Vagina (tissue), 2 donors: ENCODE measurements at regions of chr22 and their contacts with region 1.

Region 1: GRCh38 chr22:37544955-37545699 is 15.2 kb upstream of the CDC42EP1 start:
- DNase-seq: no peak
- H3K4me3 ChIP-seq: peak overlapping the region; percentile 33 to 38
- H3K27ac ChIP-seq: peak overlapping the region; percentile 98
- H3K4me1 ChIP-seq: peaks cover 78% of the 10 kb centered on the region
- H3K27me3 ChIP-seq: no peaks in the 10 kb centered on the region
- CTCF ChIP-seq: peak; percentile 32 to 70 (median 41)
- POLR2A ChIP-seq: no peak

Region 2: GRCh38 chr22:37267135-37267587 is 278.0 kb before region 1 on chr22:
- intact Hi-C with region 1: no loop called
- DNase-seq: no peak
- H3K4me3 ChIP-seq: no peak overlapping the region
- H3K27ac ChIP-seq: no peak overlapping the region
- H3K4me1 ChIP-seq: no peaks in the 10 kb centered on the region
- H3K27me3 ChIP-seq: no peaks in the 10 kb centered on the region
- CTCF ChIP-seq: peak; percentile 22 to 39 (median 29)
- POLR2A ChIP-seq: no peak

Region 3: GRCh38 chr22:37561212-37562048 is 16.3 kb after region 1 on chr22:
- intact Hi-C with region 1: loop called (anchors 2 kb)
- DNase-seq: no peak
- H3K4me3 ChIP-seq: peak overlapping the region; percentile 84 to 89
- H3K27ac ChIP-seq: peak overlapping the region; percentile 99
- H3K4me1 ChIP-seq: peaks cover 75% of the 10 kb centered on the region
- H3K27me3 ChIP-seq: no peaks in the 10 kb centered on the region
- CTCF ChIP-seq: peak; percentile 58 to 70 (median 64)
- POLR2A ChIP-seq: peak in 1 of 2 donors; percentile 48

Region 4: DNA sequence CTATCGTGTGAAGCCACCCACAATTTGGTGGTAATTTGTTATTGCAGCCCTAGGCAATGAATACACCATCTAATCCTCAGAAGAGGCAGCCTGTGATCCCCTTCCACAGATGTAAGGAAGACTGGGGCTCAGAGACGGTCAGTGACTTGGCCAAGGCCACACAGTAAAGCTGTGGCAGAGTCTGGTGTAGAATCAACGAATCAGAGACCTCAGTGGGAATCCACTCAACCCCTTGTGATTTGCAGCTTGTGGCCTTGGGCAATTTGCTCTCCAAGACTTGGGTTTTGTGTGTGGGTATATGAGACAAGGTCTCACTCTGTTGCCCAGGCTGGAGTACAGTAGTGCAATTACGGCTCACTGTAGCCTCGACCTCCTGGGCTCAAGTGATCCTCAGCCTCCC is 32.9 kb after region 1 on chr22:
- intact Hi-C with region 1: loop called (anchors 5 kb)
- DNase-seq: no peak
- H3K4me3 ChIP-seq: no peak overlapping the region
- H3K27ac ChIP-seq: no peak overlapping the region
- H3K4me1 ChIP-seq: peaks cover 6% of the 10 kb centered on the region
- H3K27me3 ChIP-seq: no peaks in the 10 kb centered on the region
- CTCF ChIP-seq: no peak
- POLR2A ChIP-seq: no peak

Region 5: GRCh38 chr22:37594237-37594636 is 49.1 kb after region 1 on chr22:
- intact Hi-C with region 1: loop called (anchors 5 kb)
- DNase-seq: no peak
- H3K4me3 ChIP-seq: no peak overlapping the region
- H3K27ac ChIP-seq: no peak overlapping the region
- H3K4me1 ChIP-seq: peaks cover 5% of the 10 kb centered on the region
- H3K27me3 ChIP-seq: no peaks in the 10 kb centered on the region
- CTCF ChIP-seq: no peak
- POLR2A ChIP-seq: no peak

Region 6: DNA sequence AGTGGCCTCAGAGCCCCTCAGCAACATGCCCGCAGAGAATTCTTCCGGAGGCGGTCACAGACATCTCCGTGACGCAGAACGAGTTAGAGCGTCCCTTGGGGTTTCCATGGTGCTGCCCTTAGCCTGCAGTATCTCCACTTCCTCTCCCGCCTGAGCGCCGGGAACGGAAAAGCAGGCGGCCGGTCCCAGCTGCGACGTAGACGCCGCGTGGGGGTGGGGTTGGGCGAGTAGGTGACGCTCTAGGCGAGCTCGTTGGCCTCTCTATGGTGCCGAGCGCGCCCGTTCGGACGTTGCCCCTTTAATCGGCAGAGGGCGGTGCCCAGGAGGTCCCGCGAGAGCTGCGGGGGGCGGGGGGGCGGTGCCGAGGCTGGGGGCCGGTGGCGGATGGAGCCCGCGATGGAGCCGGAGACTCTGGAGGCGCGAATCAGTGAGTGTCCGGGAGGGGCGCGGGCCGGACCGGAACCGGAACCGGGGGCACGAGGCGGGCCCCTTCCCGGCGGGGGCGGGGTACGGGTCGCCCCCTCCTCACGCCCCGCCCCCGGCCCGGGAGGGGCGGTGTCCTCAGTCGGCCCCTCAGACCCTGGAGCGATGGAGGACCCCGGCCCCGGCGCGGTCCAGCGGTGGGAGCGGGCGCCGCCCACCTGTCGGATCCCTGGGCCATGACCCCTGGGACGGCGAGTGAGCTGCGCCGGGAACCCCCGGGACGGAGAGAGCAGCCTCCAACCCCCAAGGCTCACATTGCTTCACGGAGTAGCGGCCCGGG is 63.5 kb after region 1 on chr22 and contains the start of gene GGA1:
- intact Hi-C with region 1: loop called (anchors 5 kb)
- DNase-seq: peak in 1 of 2 donors; percentile 98
- H3K4me3 ChIP-seq: peak within 1 kb of the TSS; percentile 67 to 83
- H3K27ac ChIP-seq: peak within 1 kb of the TSS; percentile 89
- H3K4me1 ChIP-seq: peaks cover 57% of the 10 kb centered on the region
- H3K27me3 ChIP-seq: no peaks in the 10 kb centered on the region
- CTCF ChIP-seq: peak in 1 of 3 experiments; percentile 24
- POLR2A ChIP-seq: peak in 1 of 2 donors; percentile 19
- total RNA-seq, gene GGA1: 45.7 TPM